ENCODE measurements at regions of chr1 and their contacts with region 1.

Region 1: DNA sequence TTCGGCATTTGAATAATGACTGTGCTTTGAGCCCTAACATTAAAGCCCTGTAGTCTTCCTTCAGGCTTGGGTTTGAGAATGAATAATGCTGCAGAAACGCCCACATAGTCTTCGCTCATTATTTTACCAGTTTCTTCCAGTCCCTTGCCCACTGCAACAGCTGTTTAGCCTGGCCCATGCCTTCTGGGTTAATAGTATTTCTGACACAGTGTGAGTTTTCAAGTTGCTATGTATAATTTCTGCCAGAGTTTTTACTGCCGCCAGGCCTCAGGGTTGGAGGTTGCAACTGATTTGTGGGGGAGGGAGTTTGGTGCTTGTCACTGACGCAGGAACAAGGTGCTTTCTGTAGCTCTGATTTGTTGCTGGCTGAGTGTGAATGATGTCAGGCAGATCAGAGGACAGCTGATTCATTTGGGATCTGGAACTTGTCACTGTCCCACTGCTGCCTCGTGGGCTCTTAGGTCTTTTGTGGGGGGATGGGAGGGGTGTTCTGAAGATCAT is 109.8 kb downstream of the MAST2 start:
- DNase-seq: no peak
- ATAC-seq: peak; percentile 93

Region 2: DNA sequence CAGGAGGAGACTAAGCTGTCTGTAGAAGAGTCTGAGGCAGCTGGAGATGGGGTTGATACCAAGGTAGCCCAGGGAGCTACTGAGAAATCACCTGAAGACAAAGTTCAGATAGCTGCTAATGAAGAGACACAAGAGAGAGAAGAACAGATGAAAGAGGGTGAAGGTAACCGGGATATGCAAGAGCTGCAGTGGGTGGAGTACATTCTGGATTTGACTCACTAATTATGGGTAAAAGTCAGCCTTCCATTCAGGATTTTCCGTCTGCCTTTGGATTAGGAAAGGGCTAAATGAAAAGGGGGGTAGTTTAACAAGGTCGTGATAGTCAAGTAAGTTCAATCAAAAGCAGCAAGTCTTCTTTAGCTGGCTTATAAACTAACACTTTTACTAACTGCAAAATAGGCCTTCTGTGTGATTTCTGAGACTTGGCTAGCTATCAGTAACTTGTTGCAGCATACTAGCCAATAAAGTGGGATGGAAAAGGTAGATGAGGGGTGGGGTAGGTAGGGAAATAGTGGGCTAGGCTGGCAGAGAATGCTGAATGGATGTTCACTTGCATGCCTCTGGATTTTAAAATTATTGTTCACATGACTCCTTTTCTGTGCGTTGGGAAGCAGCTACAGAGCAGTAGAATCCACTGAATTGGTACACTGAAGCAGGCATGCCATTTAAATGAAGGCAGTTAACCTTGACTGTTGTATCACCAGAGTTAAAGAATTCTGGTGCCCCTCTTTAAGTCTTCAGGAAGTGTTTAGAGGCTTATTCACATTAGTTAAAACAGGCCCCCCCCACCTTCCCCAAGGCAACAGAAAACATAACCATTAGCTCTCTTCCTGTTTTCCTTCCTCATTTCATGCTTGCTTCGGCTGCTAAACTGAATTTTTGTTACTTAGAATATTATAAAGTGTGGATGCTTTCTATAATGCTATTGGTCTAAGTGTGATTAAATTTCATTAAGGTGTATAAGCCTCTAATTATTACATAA is 304.8 kb before region 1 on chr1:
- intact Hi-C with region 1: no loop called
- DNase-seq: no peak
- ATAC-seq: no peak

Region 3: DNA sequence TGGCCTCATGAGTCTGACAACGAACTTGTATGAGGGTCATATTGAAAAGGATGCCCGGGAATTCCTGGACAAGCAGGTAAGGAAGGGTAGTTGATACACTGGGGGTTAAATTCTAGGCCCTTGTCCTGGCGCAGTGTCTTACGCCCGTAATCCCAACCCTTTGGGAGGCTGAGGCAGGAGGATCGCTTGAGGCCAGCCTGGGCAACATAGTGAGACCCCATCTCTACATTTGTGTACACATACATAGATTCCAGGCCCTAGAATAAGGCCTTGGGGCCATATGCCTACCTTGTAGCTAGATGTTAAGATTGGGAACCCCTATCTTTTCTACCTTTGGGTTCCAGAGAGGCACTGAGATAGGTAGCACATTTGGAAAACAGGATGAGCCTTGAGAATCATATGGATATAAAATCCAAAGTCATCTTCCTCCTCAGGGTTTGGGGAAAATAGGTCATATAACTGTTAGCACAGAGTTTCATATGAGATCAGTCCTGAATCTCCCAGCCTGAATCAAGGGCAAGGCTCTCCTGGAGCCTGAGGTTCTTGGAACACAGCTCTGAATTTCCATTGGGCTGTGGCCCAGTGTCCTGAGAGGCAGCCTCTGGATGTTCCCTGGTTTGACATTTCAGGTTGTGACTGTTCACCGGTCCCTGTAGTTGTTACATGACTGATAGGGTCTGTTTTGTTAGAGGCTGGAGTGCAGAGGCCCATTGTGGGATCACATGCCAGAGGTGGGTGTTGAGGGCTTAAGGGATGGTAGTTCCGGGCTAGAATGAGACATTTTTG is 114.7 kb after region 1 on chr1:
- intact Hi-C with region 1: loop called (anchors 1 kb)
- DNase-seq: no peak
- ATAC-seq: peak; percentile 72

Measured in Right ventricle myocardium inferior (tissue), 1 donor.